HepG2 (cell line): ENCODE measurements at regions of chrX and their contacts with region 1.

Region 1: DNA sequence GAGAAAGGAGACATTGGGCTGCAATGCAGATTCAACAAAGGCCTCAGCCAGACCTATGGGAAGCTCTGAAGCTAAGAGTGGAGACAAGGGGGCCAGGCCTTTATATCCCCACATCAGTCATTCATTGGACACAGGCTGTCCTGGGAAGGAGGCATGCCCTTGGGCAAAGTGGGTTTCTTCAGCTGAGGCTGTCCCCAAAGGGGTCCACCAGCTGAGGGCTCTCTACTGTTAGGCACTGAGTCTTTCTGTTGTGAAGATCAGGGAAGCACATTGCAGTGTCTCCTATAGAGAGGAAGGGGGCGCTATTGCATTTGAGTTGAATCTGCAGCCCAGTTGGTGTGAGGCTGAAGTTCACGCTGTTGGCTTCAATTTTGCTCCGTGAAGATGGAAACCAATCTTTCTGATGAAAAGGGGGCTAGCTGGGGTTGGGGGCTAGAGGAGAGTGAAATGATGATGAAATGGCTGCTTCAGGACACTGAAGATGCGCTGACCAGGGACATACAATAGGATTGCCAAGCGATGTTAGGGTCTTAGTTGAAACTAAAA is 48.0 kb downstream of the SLC25A5 start:
- DNase-seq: peak; percentile 57
- ATAC-seq: peak; percentile 74
- H3K4me3 ChIP-seq: no peak overlapping the region
- H3K27ac ChIP-seq: no peak overlapping the region
- H3K4me1 ChIP-seq: peaks cover 17% of the 10 kb centered on the region
- H3K27me3 ChIP-seq: no peaks in the 10 kb centered on the region
- CTCF ChIP-seq: peak; percentile 86
- EP300 ChIP-seq: no peak
- POLR2A ChIP-seq: no peak
- RAD21 ChIP-seq: peak; percentile 41; the same call in 1 of the 2 replicates

Region 2: GRCh38 chrX:119410027-119410823 is 106.0 kb before region 1 on chrX:
- CTCF ChIA-PET with region 1: no interaction called
- POLR2A ChIA-PET with region 1: no interaction called
- in situ Hi-C with region 1: no loop called
- intact Hi-C with region 1: loop called (anchors 10 kb)
- DNase-seq: peak; percentile 57
- ATAC-seq: peak; percentile 86
- H3K4me3 ChIP-seq: peak overlapping the region in 1 of 3 experiments; percentile 16; a peak in 1 of 6 replicates
- H3K27ac ChIP-seq: peak overlapping the region; percentile 51
- H3K4me1 ChIP-seq: peaks cover 18% of the 10 kb centered on the region
- H3K27me3 ChIP-seq: no peaks in the 10 kb centered on the region
- CTCF ChIP-seq: no peak
- EP300 ChIP-seq: no peak
- POLR2A ChIP-seq: no peak
- RAD21 ChIP-seq: no peak

Region 3: DNA sequence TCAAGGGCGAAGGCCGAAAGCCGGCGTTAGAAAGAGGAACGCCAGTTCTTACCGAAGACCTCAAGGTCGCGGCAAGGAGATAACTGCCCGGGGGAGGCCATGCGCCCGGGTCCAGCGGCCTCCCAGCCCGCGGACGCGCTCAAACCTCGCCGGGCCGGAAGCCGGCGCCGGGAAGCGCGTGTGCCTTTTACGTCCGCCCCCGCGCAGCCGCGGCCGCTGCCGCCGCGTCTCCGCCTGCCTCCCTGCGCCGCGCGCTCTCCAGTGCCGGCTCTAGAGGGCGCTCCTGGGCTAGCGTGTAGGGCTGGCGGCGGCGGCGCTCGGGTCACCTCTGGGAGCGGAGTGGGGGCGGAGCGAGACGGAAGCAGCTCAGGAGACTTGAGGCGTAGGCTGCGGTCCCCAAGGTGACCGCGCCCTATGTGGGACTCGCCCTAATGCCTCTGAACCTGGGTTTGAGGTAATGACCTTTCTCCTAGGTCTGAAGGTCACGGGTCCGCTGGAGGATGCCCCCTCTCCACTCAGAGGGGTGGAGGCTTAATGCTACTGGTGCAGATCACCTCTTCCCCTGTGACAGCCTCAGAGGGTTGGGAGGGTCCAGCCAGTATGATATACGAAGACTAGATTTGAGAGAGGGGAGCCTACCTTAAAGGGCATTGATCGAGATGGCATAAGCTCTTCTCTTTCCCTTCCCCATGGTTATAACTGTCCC is 47.1 kb before region 1 on chrX:
- CTCF ChIA-PET with region 1: interaction called, 3 read pairs
- POLR2A ChIA-PET with region 1: interaction called, 5 read pairs
- in situ Hi-C with region 1: no loop called
- intact Hi-C with region 1: loop called (anchors 5 kb)
- DNase-seq: peak; percentile 45
- ATAC-seq: peak; percentile 83
- H3K4me3 ChIP-seq: peak overlapping the region; percentile 64 to 84 (median 79); a peak in 5 of 6 replicates
- H3K27ac ChIP-seq: peak overlapping the region; percentile 91
- H3K4me1 ChIP-seq: peaks cover 29% of the 10 kb centered on the region
- H3K27me3 ChIP-seq: no peaks in the 10 kb centered on the region; a peak in 1 of 5 replicates
- CTCF ChIP-seq: peak; percentile 84
- EP300 ChIP-seq: no peak
- POLR2A ChIP-seq: no peak; a peak in 1 of 4 replicates
- RAD21 ChIP-seq: peak; percentile 77

Region 4: DNA sequence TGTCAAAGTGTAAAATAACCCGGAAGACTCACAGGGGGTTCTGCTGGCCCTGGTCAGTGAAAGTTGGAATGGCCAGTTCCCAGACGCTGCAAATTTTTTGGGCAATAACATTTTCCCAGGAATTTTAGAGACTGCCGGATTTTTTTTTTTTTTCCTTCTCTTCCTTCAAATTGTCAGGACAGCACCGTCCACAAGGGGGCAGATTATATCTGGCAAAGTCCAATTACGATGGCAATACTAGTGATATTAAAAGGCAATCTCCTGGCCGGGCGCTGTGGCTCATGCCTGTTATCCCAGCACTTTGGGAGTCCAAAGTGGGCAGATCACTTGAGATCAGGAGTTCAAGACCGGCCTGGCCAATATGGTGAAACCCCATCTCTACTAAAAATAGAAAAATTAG is 27.5 kb before region 1 on chrX:
- CTCF ChIA-PET with region 1: interaction called, 43 read pairs
- POLR2A ChIA-PET with region 1: interaction called, 6 read pairs
- in situ Hi-C with region 1: no loop called
- intact Hi-C with region 1: loop called (anchors 1 kb)
- DNase-seq: peak; percentile 27
- ATAC-seq: 0 out of 3 replicates have a peak, but pooled peaks have one; percentile 31
- H3K4me3 ChIP-seq: no peak overlapping the region
- H3K27ac ChIP-seq: no peak overlapping the region
- H3K4me1 ChIP-seq: no peaks in the 10 kb centered on the region; the same call in 1 of the 2 replicates
- H3K27me3 ChIP-seq: no peaks in the 10 kb centered on the region
- CTCF ChIP-seq: peak; percentile 63
- EP300 ChIP-seq: no peak
- POLR2A ChIP-seq: no peak
- RAD21 ChIP-seq: no peak

Region 5: GRCh38 chrX:119495734-119496726 is 20.2 kb before region 1 on chrX:
- CTCF ChIA-PET with region 1: interaction called, 4 read pairs
- POLR2A ChIA-PET with region 1: interaction called, 13 read pairs
- in situ Hi-C with region 1: no loop called
- intact Hi-C with region 1: no loop called
- DNase-seq: peak; percentile 75
- ATAC-seq: peak; percentile 96
- H3K4me3 ChIP-seq: peak overlapping the region in 2 of 3 experiments; percentile 24 to 46; a peak in 2 of 6 replicates
- H3K27ac ChIP-seq: peak overlapping the region; percentile 93
- H3K4me1 ChIP-seq: peaks cover 45% of the 10 kb centered on the region
- H3K27me3 ChIP-seq: no peaks in the 10 kb centered on the region
- CTCF ChIP-seq: peak; percentile 40
- EP300 ChIP-seq: peak in 1 of 2 experiments; percentile 67; a peak in 1 of 4 replicates
- POLR2A ChIP-seq: peak in 1 of 2 experiments; percentile 25; a peak in 1 of 4 replicates
- RAD21 ChIP-seq: no peak

Region 6: GRCh38 chrX:119693040-119693995 is 177.1 kb after region 1 on chrX and contains the start of gene SEPTIN6:
- CTCF ChIA-PET with region 1: no interaction called
- POLR2A ChIA-PET with region 1: interaction called, 3 read pairs
- in situ Hi-C with region 1: no loop called
- intact Hi-C with region 1: loop called (anchors 10 kb)
- DNase-seq: peak; percentile 59
- ATAC-seq: peak; percentile 73
- H3K4me3 ChIP-seq: peak within 1 kb of the TSS; percentile 68 to 82 (median 77)
- H3K27ac ChIP-seq: peak within 1 kb of the TSS; percentile 60
- H3K4me1 ChIP-seq: peaks cover 14% of the 10 kb centered on the region
- H3K27me3 ChIP-seq: no peaks in the 10 kb centered on the region
- CTCF ChIP-seq: no peak
- EP300 ChIP-seq: no peak
- POLR2A ChIP-seq: peak; percentile 55 to 75
- RAD21 ChIP-seq: no peak
- total RNA-seq, gene SEPTIN6: 21.7 and 34.1 TPM in 2 replicates

Region 7: GRCh38 chrX:119729408-119730201 is 213.4 kb after region 1 on chrX:
- CTCF ChIA-PET with region 1: interaction called, 7 read pairs
- POLR2A ChIA-PET with region 1: no interaction called
- in situ Hi-C with region 1: loop called (anchors 25 kb)
- intact Hi-C with region 1: loop called (anchors 2 kb)
- DNase-seq: peak; percentile 55
- ATAC-seq: peak; percentile 46; the same call in 2 of the 3 replicates
- H3K4me3 ChIP-seq: no peak overlapping the region
- H3K27ac ChIP-seq: no peak overlapping the region
- H3K4me1 ChIP-seq: no peaks in the 10 kb centered on the region
- H3K27me3 ChIP-seq: 0 out of 5 replicates have a peak, but pooled peaks cover 0 to under 1% of the 10 kb centered on the region in 2 experiments
- CTCF ChIP-seq: peak; percentile 57
- EP300 ChIP-seq: no peak
- POLR2A ChIP-seq: no peak
- RAD21 ChIP-seq: 0 out of 2 replicates have a peak, but pooled peaks have one; percentile 26